ENCODE measurements at regions of chr2 and their contacts with region 1.

Region 1: GRCh38 chr2:84495539-84496146 is 20.7 kb upstream of the DNAH6 start:
- DNase-seq: peak; percentile 80
- H3K4me3 ChIP-seq: no peak overlapping the region
- H3K27ac ChIP-seq: peak overlapping the region; percentile 99
- H3K4me1 ChIP-seq: peaks cover 21% of the 10 kb centered on the region
- H3K27me3 ChIP-seq: no peaks in the 10 kb centered on the region
- CTCF ChIP-seq: peak; percentile 38 to 44
- POLR2A ChIP-seq: no peak

Region 2: DNA sequence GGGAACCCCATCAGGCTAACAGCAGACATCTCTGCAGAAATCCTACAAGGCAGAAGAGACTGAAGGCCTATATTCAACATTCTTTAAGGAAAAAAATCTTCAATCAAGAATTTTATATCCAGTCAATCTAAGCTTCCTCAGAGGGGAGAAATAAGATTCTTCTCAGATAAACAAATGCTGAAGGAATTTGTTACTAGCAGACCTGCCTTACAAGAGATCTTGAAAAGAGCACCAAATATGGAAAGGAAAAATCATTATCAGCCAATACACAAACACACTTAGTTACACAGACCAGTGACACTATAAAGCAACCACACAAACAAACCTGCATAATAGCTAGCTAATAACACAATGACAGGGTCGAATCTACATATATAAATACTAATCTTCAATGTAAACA is 133.1 kb before region 1 on chr2:
- CTCF ChIA-PET with region 1: no interaction called
- POLR2A ChIA-PET with region 1: no interaction called
- dilution Hi-C with region 1: no loop called
- intact Hi-C with region 1: no loop called
- DNase-seq: no peak
- H3K4me3 ChIP-seq: no peak overlapping the region
- H3K27ac ChIP-seq: no peak overlapping the region
- H3K4me1 ChIP-seq: no peaks in the 10 kb centered on the region
- H3K27me3 ChIP-seq: no peaks in the 10 kb centered on the region
- CTCF ChIP-seq: no peak
- POLR2A ChIP-seq: no peak

Region 3: GRCh38 chr2:84459018-84459943 is 36.4 kb before region 1 on chr2 and contains the start of gene SUCLG1:
- CTCF ChIA-PET with region 1: interaction called, 3 read pairs
- POLR2A ChIA-PET with region 1: no interaction called
- dilution Hi-C with region 1: no loop called
- intact Hi-C with region 1: loop called (anchors 1 kb)
- DNase-seq: peak; percentile 87
- H3K4me3 ChIP-seq: peak within 1 kb of the TSS; percentile 76 to 89 (median 88)
- H3K27ac ChIP-seq: peak within 1 kb of the TSS; percentile 90
- H3K4me1 ChIP-seq: peaks cover 11% of the 10 kb centered on the region
- H3K27me3 ChIP-seq: no peaks in the 10 kb centered on the region
- CTCF ChIP-seq: no peak
- POLR2A ChIP-seq: peak; percentile 50
- total RNA-seq, gene SUCLG1: 59.2 and 62.6 TPM in 2 replicates

Region 4: GRCh38 chr2:84516234-84516986 is 20.8 kb after region 1 on chr2 and contains the start of gene DNAH6:
- CTCF ChIA-PET with region 1: interaction called, 4 read pairs
- POLR2A ChIA-PET with region 1: no interaction called
- dilution Hi-C with region 1: no loop called
- intact Hi-C with region 1: loop called (anchors 1 kb)
- DNase-seq: peak; percentile 92
- H3K4me3 ChIP-seq: peak within 1 kb of the TSS; percentile 13 to 53 (median 41)
- H3K27ac ChIP-seq: no peak within 1 kb of the TSS
- H3K4me1 ChIP-seq: peaks cover 7% of the 10 kb centered on the region
- H3K27me3 ChIP-seq: peaks cover 12 to 20% of the 10 kb centered on the region in 2 experiments
- CTCF ChIP-seq: no peak
- POLR2A ChIP-seq: no peak
- total RNA-seq, gene DNAH6: 0.24 and 0.25 TPM in 2 replicates

Region 5: DNA sequence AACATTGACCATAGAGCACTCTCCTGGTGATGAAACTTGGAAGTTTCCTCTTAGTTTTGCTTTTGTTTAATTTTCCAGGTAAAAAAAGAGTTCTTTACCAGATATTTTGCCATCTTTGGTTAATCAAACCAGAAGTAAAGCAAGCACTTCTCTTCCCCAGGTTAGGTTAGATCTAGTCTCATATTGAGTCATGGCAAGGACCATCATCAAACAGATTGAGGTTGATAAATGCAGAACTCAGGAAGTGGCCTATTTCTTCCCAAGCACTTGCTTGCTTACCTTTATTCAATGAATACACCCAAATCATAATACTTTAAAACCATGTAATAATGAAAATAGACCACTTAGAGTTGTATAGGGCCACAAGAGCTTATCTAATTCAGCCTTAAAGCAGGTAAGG is 44.1 kb after region 1 on chr2:
- CTCF ChIA-PET with region 1: no interaction called
- POLR2A ChIA-PET with region 1: no interaction called
- dilution Hi-C with region 1: no loop called
- intact Hi-C with region 1: no loop called
- DNase-seq: no peak
- H3K4me3 ChIP-seq: no peak overlapping the region
- H3K27ac ChIP-seq: no peak overlapping the region
- H3K4me1 ChIP-seq: no peaks in the 10 kb centered on the region
- H3K27me3 ChIP-seq: peaks cover 1 to 4% of the 10 kb centered on the region in 2 experiments
- CTCF ChIP-seq: no peak
- POLR2A ChIP-seq: no peak

Region 6: DNA sequence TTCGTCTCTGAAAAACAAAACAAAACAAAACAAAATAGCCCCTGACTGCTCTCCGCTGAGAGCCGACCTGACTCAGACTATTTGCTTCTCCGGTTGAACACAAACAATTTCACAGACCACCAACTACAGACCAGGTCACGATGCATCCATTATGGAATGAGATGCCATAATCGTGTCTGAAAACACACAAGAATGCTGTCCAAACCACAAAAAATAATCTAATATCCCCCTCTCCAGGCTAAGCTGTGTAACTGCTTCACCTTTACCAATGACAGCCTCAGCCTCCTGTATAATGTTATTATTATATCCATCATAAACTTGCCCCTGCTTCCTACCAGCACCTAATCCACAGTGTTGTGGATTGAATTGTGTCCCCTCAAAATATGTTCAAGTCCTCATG is 135.4 kb after region 1 on chr2:
- CTCF ChIA-PET with region 1: interaction called, 5 read pairs
- POLR2A ChIA-PET with region 1: no interaction called
- dilution Hi-C with region 1: no loop called
- intact Hi-C with region 1: loop called (anchors 1 kb)
- DNase-seq: peak; percentile 30
- H3K4me3 ChIP-seq: no peak overlapping the region
- H3K27ac ChIP-seq: no peak overlapping the region
- H3K4me1 ChIP-seq: no peaks in the 10 kb centered on the region
- H3K27me3 ChIP-seq: peaks cover 2 to 6% of the 10 kb centered on the region in 2 experiments
- CTCF ChIP-seq: peak; percentile 39 to 49
- POLR2A ChIP-seq: no peak

Region 7: DNA sequence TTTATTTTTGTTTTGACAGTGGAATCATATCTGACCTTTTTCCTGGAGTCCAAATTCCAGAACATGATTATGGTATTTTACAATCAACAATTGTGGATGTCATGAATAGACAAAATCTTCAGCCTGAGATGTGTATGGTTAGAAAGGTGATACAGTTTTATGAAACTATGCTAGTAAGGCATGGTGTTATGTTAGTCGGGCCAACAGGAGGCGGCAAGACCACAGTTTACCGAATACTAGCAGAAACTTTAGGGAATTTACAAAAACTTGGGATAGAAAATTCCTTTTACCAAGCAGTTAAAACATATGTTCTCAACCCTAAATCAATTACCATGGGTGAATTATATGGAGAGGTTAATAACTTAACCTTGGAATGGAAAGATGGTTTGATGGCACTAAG is 157.7 kb after region 1 on chr2:
- CTCF ChIA-PET with region 1: no interaction called
- POLR2A ChIA-PET with region 1: no interaction called
- dilution Hi-C with region 1: no loop called
- intact Hi-C with region 1: no loop called
- DNase-seq: no peak
- H3K4me3 ChIP-seq: no peak overlapping the region
- H3K27ac ChIP-seq: no peak overlapping the region
- H3K4me1 ChIP-seq: no peaks in the 10 kb centered on the region
- H3K27me3 ChIP-seq: peaks cover 4 to 13% of the 10 kb centered on the region in 2 experiments
- CTCF ChIP-seq: no peak
- POLR2A ChIP-seq: no peak

Region 8: GRCh38 chr2:84865181-84865783 is 369.6 kb after region 1 on chr2:
- CTCF ChIA-PET with region 1: no interaction called
- POLR2A ChIA-PET with region 1: no interaction called
- dilution Hi-C with region 1: no loop called
- intact Hi-C with region 1: loop called (anchors 5 kb)
- DNase-seq: no peak
- H3K4me3 ChIP-seq: no peak overlapping the region
- H3K27ac ChIP-seq: no peak overlapping the region
- H3K4me1 ChIP-seq: no peaks in the 10 kb centered on the region
- H3K27me3 ChIP-seq: peaks cover 0 to 2% of the 10 kb centered on the region in 2 experiments
- CTCF ChIP-seq: peak in 1 of 2 donors; percentile 15
- POLR2A ChIP-seq: no peak

Region 9: DNA sequence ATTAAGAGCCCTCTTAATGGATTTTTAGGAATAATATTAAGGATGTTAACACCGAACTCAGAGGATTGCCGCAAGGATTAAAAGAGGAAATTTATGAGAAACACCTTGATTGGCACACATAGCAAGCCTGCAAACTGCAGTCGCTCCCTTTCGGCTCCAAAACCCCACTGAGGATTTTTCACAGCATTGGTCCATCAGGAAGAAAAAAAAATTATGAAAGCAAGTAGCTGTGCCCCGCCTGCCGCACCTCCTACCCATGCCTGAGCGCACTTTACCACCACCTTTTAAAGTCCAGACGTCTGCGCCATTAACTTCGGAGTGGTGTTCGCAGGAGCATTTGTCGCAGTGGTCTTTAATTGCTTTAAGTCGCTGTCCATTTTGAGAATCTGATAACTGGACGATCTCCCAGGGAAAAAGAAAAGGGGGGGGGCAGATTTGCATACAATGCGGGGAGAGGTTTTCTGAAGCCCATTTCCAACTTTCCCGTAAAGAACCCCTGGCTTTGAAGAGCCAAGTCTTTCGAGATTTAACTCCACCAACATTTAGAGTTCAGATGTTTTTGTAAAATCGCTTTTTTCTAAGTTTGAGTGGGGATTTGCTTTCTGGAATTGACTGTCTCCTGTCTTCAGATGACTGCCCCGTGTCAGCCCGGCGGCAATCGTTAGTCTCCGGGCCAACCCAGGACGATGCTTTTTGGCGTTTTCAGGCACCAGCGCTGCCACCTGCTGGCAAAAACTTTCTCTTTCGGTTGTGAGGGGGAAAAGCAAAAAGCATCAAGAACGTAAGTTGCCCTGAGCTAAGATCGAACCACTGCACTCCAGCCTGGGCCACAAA is 386.2 kb after region 1 on chr2:
- CTCF ChIA-PET with region 1: interaction called, 13 read pairs
- POLR2A ChIA-PET with region 1: no interaction called
- dilution Hi-C with region 1: no loop called
- intact Hi-C with region 1: loop called (anchors 1 kb)
- DNase-seq: peak; percentile 82
- H3K4me3 ChIP-seq: peak overlapping the region; percentile 3 to 69 (median 15)
- H3K27ac ChIP-seq: no peak overlapping the region
- H3K4me1 ChIP-seq: peaks cover 16% of the 10 kb centered on the region
- H3K27me3 ChIP-seq: peaks cover 41% of the 10 kb centered on the region in 2 experiments
- CTCF ChIP-seq: peak; percentile 72 to 76
- POLR2A ChIP-seq: no peak